Ovary (tissue), 10 donors: ENCODE measurements at regions of chr5 and their contacts with region 1.

Region 1: GRCh38 chr5:149228618-149229297 is 42.9 kb upstream of the AFAP1L1 start:
- DNase-seq: peak in 1 of 5 donors; percentile 36
- H3K4me3 ChIP-seq: no peak overlapping the region
- H3K27ac ChIP-seq: no peak overlapping the region
- H3K4me1 ChIP-seq: no peaks in the 10 kb centered on the region
- H3K27me3 ChIP-seq: no peaks in the 10 kb centered on the region
- CTCF ChIP-seq: peak in 2 of 3 donors; percentile 35 to 42
- EP300 ChIP-seq: no peak
- POLR2A ChIP-seq: no peak

Region 2: DNA sequence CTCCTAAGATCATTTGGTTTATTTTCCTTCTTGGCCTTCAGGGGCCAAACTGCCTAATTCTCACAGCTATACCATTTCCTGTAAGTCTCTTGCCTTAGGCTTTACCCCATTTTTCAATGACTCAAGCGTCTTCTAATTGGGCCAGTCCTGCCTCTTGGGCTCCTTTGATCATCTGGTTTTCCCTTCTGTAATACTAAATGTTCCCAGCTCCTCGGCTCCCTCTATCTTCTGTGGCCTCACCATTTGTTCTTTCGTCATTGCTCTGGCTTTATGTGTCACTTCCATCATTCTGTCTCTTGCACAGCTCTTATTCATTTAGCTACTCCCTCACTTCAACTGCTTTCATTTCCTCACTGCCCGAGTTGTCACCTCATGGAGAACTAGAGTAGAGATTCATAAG is 931.0 kb before region 1 on chr5:
- intact Hi-C with region 1: no loop called
- DNase-seq: no peak
- H3K4me3 ChIP-seq: no peak overlapping the region
- H3K27ac ChIP-seq: no peak overlapping the region
- H3K4me1 ChIP-seq: no peaks in the 10 kb centered on the region
- H3K27me3 ChIP-seq: no peaks in the 10 kb centered on the region
- CTCF ChIP-seq: no peak
- EP300 ChIP-seq: no peak
- POLR2A ChIP-seq: no peak

Region 3: DNA sequence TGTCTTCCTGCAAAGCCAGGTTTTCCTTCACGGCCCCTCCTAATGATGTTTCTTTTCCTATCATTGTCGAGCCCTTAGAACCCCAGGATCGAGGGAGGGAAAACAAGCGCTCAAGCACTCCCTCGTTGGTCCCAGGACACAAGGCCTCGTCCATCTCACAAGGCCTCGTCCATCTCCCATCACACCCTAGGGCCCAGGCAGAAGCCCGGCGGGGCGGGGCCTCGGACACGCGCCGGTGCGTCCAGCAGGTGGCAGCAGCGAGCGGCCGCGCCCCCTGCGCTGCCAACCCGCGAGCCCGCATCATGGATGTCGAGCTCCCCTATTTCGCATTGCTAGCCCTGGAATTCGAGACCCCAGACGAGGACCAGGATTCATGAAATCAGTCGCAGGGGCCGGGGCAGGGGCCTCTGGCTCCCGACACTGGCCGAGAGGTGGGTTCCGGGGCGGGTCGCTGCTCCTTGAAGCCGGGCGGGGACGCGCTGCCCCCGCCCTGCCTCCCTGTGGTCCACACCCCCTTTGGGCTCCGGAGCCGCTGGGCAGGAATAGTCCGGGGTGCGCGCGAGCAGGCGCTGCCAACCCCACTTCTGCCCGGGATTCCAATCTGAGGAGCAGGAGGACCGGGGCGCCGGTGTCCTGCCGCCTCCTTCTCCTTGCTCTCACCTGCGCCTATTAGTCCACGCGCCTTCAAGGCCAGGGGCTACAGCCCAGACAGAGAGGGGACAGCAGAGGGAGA is 87.4 kb before region 1 on chr5 and contains the start of gene ABLIM3:
- intact Hi-C with region 1: loop called in 1 of 4 experiments (anchors 5 kb)
- DNase-seq: peak; percentile 26 to 79 (median 55)
- H3K4me3 ChIP-seq: peak within 1 kb of the TSS; percentile 77
- H3K27ac ChIP-seq: peak within 1 kb of the TSS in 1 of 2 donors; percentile 55
- H3K4me1 ChIP-seq: no peaks in the 10 kb centered on the region
- H3K27me3 ChIP-seq: no peaks in the 10 kb centered on the region
- CTCF ChIP-seq: peak; percentile 47 to 69 (median 64)
- EP300 ChIP-seq: no peak
- POLR2A ChIP-seq: no peak
- total RNA-seq, gene ABLIM3: 1.7 to 9.3 (median 6.2) TPM

Region 4: GRCh38 chr5:149576021-149576420 is 347.3 kb after region 1 on chr5:
- intact Hi-C with region 1: no loop called
- DNase-seq: no peak
- H3K4me3 ChIP-seq: no peak overlapping the region
- H3K27ac ChIP-seq: no peak overlapping the region
- H3K4me1 ChIP-seq: no peaks in the 10 kb centered on the region
- H3K27me3 ChIP-seq: no peaks in the 10 kb centered on the region
- CTCF ChIP-seq: no peak
- EP300 ChIP-seq: no peak
- POLR2A ChIP-seq: no peak